ENCODE measurements at regions of chr2 and their contacts with region 1.

Region 1: DNA sequence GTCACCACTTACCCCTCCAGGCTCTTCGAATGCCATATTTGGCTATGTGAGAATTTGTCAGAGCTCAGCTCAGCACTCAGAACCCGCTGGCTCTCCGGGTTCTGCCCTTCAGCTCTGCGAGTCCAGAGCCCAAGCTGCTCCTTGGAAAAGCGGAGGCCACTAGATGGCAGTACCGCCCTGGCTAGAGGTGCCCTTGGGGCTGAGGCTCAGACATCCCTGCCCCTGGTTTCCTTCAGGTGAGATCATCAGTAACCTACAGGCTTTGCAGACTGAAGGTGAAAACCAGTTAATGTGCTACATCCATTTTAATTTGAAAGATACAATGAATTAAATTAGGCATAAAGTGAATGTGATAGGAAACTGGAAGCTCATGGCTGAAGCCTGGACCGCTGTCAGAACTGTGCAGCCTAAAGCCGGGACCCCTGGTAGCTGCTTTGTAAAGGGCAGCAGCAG is 285.6 kb downstream of the AGAP1 start:
- DNase-seq: no peak
- ATAC-seq: peak; percentile 95
- H3K4me3 ChIP-seq: no peak overlapping the region
- H3K27ac ChIP-seq: no peak overlapping the region
- H3K4me1 ChIP-seq: no peaks in the 10 kb centered on the region
- H3K27me3 ChIP-seq: peaks cover 0 to 2% of the 10 kb centered on the region in 2 experiments; a peak in 3 of 4 replicates
- CTCF ChIP-seq: peak; percentile 76 to 91 (median 81)
- EP300 ChIP-seq: no peak
- POLR2A ChIP-seq: no peak
- RAD21 ChIP-seq: peak; percentile 86

Region 2: DNA sequence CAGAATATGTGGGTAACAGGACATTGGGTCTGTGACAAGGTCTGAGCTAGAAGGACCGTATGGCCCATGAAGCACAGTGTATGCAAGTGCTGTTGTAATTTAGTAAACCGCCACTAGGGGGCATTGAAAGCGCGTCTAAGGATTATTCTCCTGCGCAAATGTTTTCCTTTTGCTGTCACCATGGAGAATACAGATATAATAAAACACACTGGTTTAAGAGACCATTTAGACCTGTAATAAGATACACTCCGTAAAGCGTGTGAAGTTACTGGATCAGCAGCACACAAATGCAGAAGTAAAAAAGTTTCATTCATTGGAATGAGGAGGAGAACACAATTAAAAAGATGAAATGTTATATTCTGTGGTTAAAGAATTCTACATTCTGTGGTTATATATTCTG is 13.2 kb before region 1 on chr2:
- CTCF ChIA-PET with region 1: interaction called, 30 read pairs
- POLR2A ChIA-PET with region 1: no interaction called
- RAD21 ChIA-PET with region 1: interaction called, 4 read pairs
- SMC1A ChIA-PET with region 1: no interaction called
- in situ Hi-C with region 1: no loop called
- intact Hi-C with region 1: no loop called
- DNase-seq: no peak
- ATAC-seq: peak; percentile 94
- H3K4me3 ChIP-seq: no peak overlapping the region
- H3K27ac ChIP-seq: no peak overlapping the region
- H3K4me1 ChIP-seq: no peaks in the 10 kb centered on the region
- H3K27me3 ChIP-seq: no peaks in the 10 kb centered on the region
- CTCF ChIP-seq: peak; percentile 68 to 82 (median 80)
- EP300 ChIP-seq: no peak
- POLR2A ChIP-seq: no peak
- RAD21 ChIP-seq: peak; percentile 72

Region 3: DNA sequence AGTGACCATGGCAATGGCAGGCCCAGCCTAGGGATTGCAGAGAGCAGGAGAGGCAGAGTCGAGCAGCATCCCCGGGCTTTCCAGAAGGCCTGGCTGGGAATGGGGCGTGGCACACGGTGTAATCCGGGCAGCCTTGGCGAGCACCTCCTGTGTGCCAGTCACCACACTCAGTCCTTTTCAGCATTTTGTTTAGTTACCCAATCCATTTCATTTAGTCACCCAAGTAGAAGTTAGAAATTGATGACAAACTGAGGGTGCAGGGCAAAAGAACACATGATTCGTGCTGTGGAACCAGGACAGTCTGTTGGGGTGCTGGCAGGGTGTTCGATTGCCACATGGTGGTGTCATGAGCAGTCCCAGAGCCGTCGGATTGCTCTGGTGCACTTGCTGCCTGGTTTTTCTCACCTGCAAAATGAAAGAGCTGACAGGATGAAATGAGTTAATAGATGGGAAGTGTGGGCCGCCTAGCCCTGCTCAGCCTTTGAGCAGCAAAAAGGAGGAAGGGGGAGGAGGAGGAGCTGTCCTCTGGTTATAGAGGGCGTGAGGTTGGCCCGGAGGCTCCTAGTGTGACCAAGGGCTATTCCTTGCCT is 13.8 kb after region 1 on chr2:
- CTCF ChIA-PET with region 1: interaction called, 13 read pairs
- POLR2A ChIA-PET with region 1: no interaction called
- RAD21 ChIA-PET with region 1: no interaction called
- SMC1A ChIA-PET with region 1: interaction called, 14 read pairs
- in situ Hi-C with region 1: no loop called
- intact Hi-C with region 1: no loop called
- DNase-seq: no peak
- ATAC-seq: peak; percentile 64
- H3K4me3 ChIP-seq: no peak overlapping the region
- H3K27ac ChIP-seq: no peak overlapping the region
- H3K4me1 ChIP-seq: no peaks in the 10 kb centered on the region
- H3K27me3 ChIP-seq: no peaks in the 10 kb centered on the region; a peak in 1 of 4 replicates
- CTCF ChIP-seq: peak; percentile 29 to 46 (median 42); a peak in 5 of 6 replicates
- EP300 ChIP-seq: no peak
- POLR2A ChIP-seq: no peak
- RAD21 ChIP-seq: 0 out of 2 replicates have a peak, but pooled peaks have one; percentile 14

Region 4: GRCh38 chr2:235827585-235827992 is 48.1 kb after region 1 on chr2:
- CTCF ChIA-PET with region 1: no interaction called
- POLR2A ChIA-PET with region 1: no interaction called
- RAD21 ChIA-PET with region 1: no interaction called
- SMC1A ChIA-PET with region 1: no interaction called
- in situ Hi-C with region 1: no loop called
- intact Hi-C with region 1: no loop called
- DNase-seq: no peak
- ATAC-seq: no peak
- H3K4me3 ChIP-seq: no peak overlapping the region
- H3K27ac ChIP-seq: no peak overlapping the region
- H3K4me1 ChIP-seq: no peaks in the 10 kb centered on the region
- H3K27me3 ChIP-seq: no peaks in the 10 kb centered on the region
- CTCF ChIP-seq: no peak
- EP300 ChIP-seq: no peak
- POLR2A ChIP-seq: no peak
- RAD21 ChIP-seq: no peak

Region 5: GRCh38 chr2:236049981-236050380 is 270.5 kb after region 1 on chr2:
- CTCF ChIA-PET with region 1: interaction called, 10 read pairs
- POLR2A ChIA-PET with region 1: no interaction called
- RAD21 ChIA-PET with region 1: no interaction called
- SMC1A ChIA-PET with region 1: interaction called, 3 read pairs
- in situ Hi-C with region 1: no loop called
- intact Hi-C with region 1: no loop called
- DNase-seq: peak; percentile 48
- ATAC-seq: peak; percentile 63
- H3K4me3 ChIP-seq: no peak overlapping the region
- H3K27ac ChIP-seq: no peak overlapping the region
- H3K4me1 ChIP-seq: no peaks in the 10 kb centered on the region
- H3K27me3 ChIP-seq: peaks cover 0 to 1% of the 10 kb centered on the region in 2 experiments; a peak in 1 of 4 replicates
- CTCF ChIP-seq: no peak; a peak in 2 of 6 replicates
- EP300 ChIP-seq: no peak
- POLR2A ChIP-seq: no peak
- RAD21 ChIP-seq: 0 out of 2 replicates have a peak, but pooled peaks have one; percentile 15

Region 6: DNA sequence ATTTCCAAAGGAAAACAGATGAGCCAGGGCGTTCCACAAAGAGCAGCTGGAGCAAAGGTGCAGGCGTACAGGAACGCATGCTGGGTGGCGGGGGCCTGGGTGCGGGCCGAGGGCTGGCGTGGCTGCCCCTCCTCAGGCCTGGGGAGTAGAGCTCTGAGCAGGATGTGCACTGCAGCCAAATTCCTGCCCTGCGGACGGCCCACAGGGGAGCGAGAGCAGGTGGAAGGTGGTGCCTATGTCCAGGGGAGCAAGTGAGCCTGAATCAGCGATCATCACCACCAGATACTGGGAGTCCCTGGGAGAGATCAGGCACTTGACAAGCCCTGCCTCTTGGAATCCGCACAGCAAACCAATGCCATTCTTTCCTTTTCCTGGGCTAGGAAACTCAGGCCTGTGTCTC is 282.4 kb after region 1 on chr2:
- CTCF ChIA-PET with region 1: no interaction called
- POLR2A ChIA-PET with region 1: no interaction called
- RAD21 ChIA-PET with region 1: no interaction called
- SMC1A ChIA-PET with region 1: no interaction called
- in situ Hi-C with region 1: no loop called
- intact Hi-C with region 1: no loop called
- DNase-seq: no peak
- ATAC-seq: no peak
- H3K4me3 ChIP-seq: no peak overlapping the region
- H3K27ac ChIP-seq: no peak overlapping the region
- H3K4me1 ChIP-seq: no peaks in the 10 kb centered on the region
- H3K27me3 ChIP-seq: no peaks in the 10 kb centered on the region
- CTCF ChIP-seq: no peak
- EP300 ChIP-seq: no peak
- POLR2A ChIP-seq: no peak
- RAD21 ChIP-seq: no peak

Region 7: GRCh38 chr2:236180831-236181453 is 401.5 kb after region 1 on chr2:
- CTCF ChIA-PET with region 1: interaction called, 84 read pairs
- POLR2A ChIA-PET with region 1: no interaction called
- RAD21 ChIA-PET with region 1: interaction called, 26 read pairs
- SMC1A ChIA-PET with region 1: interaction called, 28 read pairs
- in situ Hi-C with region 1: loop called (anchors 5 kb)
- intact Hi-C with region 1: loop called (anchors 1 kb)
- DNase-seq: no peak
- ATAC-seq: peak; percentile 54; the same call in 2 of the 3 replicates
- H3K4me3 ChIP-seq: no peak overlapping the region
- H3K27ac ChIP-seq: no peak overlapping the region
- H3K4me1 ChIP-seq: no peaks in the 10 kb centered on the region
- H3K27me3 ChIP-seq: no peaks in the 10 kb centered on the region; a peak in 1 of 4 replicates
- CTCF ChIP-seq: peak; percentile 54 to 61 (median 57)
- EP300 ChIP-seq: no peak
- POLR2A ChIP-seq: no peak
- RAD21 ChIP-seq: peak; percentile 65

Region 8: GRCh38 chr2:237072067-237072931 is 1292.8 kb after region 1 on chr2:
- CTCF ChIA-PET with region 1: interaction called, 6 read pairs
- POLR2A ChIA-PET with region 1: no interaction called
- RAD21 ChIA-PET with region 1: interaction called, 3 read pairs
- SMC1A ChIA-PET with region 1: no interaction called
- in situ Hi-C with region 1: loop called (anchors 5 kb)
- intact Hi-C with region 1: no loop called
- DNase-seq: no peak
- ATAC-seq: peak; percentile 81
- H3K4me3 ChIP-seq: no peak overlapping the region
- H3K27ac ChIP-seq: no peak overlapping the region
- H3K4me1 ChIP-seq: no peaks in the 10 kb centered on the region
- H3K27me3 ChIP-seq: no peaks in the 10 kb centered on the region
- CTCF ChIP-seq: peak; percentile 92 to 95 (median 94)
- EP300 ChIP-seq: no peak
- POLR2A ChIP-seq: no peak
- RAD21 ChIP-seq: peak; percentile 97